ENCODE measurements at regions of chr6 and their contacts with region 1.

Region 1: GRCh38 chr6:1609648-1610496 is at the start of gene FOXC1:
- DNase-seq: peak; percentile 92 to 94
- H3K4me3 ChIP-seq: peak within 1 kb of the TSS; percentile 60
- H3K4me3 Mint-ChIP-seq: peak within 1 kb of the TSS; percentile 79
- H3K27ac Mint-ChIP-seq: peak within 1 kb of the TSS; percentile 48
- H3K4me1 ChIP-seq: peaks cover 7% of the 10 kb centered on the region
- H3K4me1 Mint-ChIP-seq: no peaks in the 10 kb centered on the region
- H3K27me3 ChIP-seq: no peaks in the 10 kb centered on the region
- H3K27me3 Mint-ChIP-seq: peaks cover 2% of the 10 kb centered on the region
- CTCF ChIP-seq: no peak
- total RNA-seq, gene FOXC1: 6.8 and 7.1 TPM in 2 replicates

Region 2: GRCh38 chr6:1641323-1641885 is 31.5 kb after region 1 on chr6:
- CTCF ChIA-PET with region 1: interaction called, 8 read pairs
- POLR2A ChIA-PET with region 1: interaction called, 4 read pairs
- intact Hi-C with region 1: loop called (anchors 2 kb)
- DNase-seq: peak; percentile 93 to 95
- H3K4me3 ChIP-seq: no peak overlapping the region
- H3K4me3 Mint-ChIP-seq: peak overlapping the region; percentile 66
- H3K27ac Mint-ChIP-seq: peak overlapping the region; percentile 97
- H3K4me1 ChIP-seq: peaks cover 32% of the 10 kb centered on the region
- H3K4me1 Mint-ChIP-seq: peaks cover 40% of the 10 kb centered on the region
- H3K27me3 ChIP-seq: no peaks in the 10 kb centered on the region
- H3K27me3 Mint-ChIP-seq: no peaks in the 10 kb centered on the region
- CTCF ChIP-seq: peak in 1 of 2 experiments; percentile 17

Region 3: DNA sequence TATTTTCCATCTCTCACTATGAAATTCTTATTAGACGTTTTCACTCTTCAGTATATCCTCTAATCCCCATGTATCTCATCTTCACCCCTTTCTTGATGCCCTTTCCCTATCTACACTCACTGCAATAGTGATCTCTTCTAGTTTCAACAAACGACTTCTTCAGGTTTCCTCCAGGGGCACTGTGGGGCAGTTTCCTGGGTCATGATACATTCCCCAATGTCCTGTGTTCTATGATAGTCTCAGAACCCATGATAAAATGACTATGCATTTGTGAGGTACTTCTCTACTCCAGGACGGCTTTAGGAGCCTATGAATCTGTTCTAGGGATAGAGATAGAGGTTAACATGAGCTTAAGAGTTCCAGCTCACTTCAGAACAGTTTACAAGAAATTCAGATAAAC is 183.1 kb after region 1 on chr6:
- CTCF ChIA-PET with region 1: no interaction called
- POLR2A ChIA-PET with region 1: no interaction called
- intact Hi-C with region 1: loop called (anchors 10 kb)
- DNase-seq: peak in 1 of 2 experiments; percentile 58
- H3K4me3 ChIP-seq: no peak overlapping the region
- H3K4me3 Mint-ChIP-seq: no peak overlapping the region
- H3K27ac Mint-ChIP-seq: no peak overlapping the region
- H3K4me1 ChIP-seq: peaks cover 16% of the 10 kb centered on the region
- H3K4me1 Mint-ChIP-seq: peaks cover 3% of the 10 kb centered on the region
- H3K27me3 ChIP-seq: no peaks in the 10 kb centered on the region
- H3K27me3 Mint-ChIP-seq: no peaks in the 10 kb centered on the region
- CTCF ChIP-seq: peak; percentile 55 to 69

Measured in Caco-2 (cell line).